Activated CD4-positive, alpha-beta memory T cell treated with anti-CD3 and anti-CD28 coated beads, Interleukin-2, amount 10 ng/mL, durations not matched to agents 7 days and 5 days (primary cell): ENCODE measurements at regions of chr3 and their contacts with region 1.

Region 1: GRCh38 chr3:4978204-4978965 is 852 bp upstream of the BHLHE40 start:
- DNase-seq: peak; percentile 92
- H3K4me3 Mint-ChIP-seq: peak overlapping the region; percentile 94
- H3K27ac Mint-ChIP-seq: peak overlapping the region; percentile 99
- H3K4me1 Mint-ChIP-seq: peaks cover 42% of the 10 kb centered on the region
- H3K27me3 Mint-ChIP-seq: no peaks in the 10 kb centered on the region

Region 2: GRCh38 chr3:4736284-4736861 is 242.0 kb before region 1 on chr3:
- CTCF ChIA-PET with region 1: interaction called, 16 read pairs
- POLR2A ChIA-PET with region 1: interaction called, 107 read pairs
- DNase-seq: no peak
- H3K4me3 Mint-ChIP-seq: peak overlapping the region; percentile 14
- H3K27ac Mint-ChIP-seq: peak overlapping the region; percentile 87
- H3K4me1 Mint-ChIP-seq: peaks cover 82% of the 10 kb centered on the region
- H3K27me3 Mint-ChIP-seq: no peaks in the 10 kb centered on the region

Region 3: DNA sequence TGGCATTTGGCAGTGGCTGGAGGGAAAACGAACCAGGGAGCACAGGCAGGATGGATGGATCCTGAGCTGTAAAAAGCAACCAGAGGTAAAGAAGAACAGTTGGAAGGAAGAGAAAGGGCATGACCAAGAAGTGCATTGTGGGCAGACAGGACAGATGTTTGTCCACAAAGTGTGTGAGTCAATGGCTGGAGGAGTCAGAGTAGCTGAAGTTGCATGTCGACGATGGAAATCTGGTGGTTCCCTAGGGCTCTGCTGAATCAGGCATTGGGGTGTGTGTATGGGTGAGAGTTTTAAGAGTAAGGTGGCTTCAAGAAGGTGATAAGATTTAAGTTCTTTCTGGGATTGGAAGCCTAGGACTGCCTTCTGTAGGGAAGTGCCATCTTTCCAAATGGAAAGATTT is 213.2 kb before region 1 on chr3:
- CTCF ChIA-PET with region 1: no interaction called
- POLR2A ChIA-PET with region 1: no interaction called
- DNase-seq: no peak
- H3K4me3 Mint-ChIP-seq: no peak overlapping the region
- H3K27ac Mint-ChIP-seq: no peak overlapping the region
- H3K4me1 Mint-ChIP-seq: peaks cover 5% of the 10 kb centered on the region
- H3K27me3 Mint-ChIP-seq: no peaks in the 10 kb centered on the region

Region 4: DNA sequence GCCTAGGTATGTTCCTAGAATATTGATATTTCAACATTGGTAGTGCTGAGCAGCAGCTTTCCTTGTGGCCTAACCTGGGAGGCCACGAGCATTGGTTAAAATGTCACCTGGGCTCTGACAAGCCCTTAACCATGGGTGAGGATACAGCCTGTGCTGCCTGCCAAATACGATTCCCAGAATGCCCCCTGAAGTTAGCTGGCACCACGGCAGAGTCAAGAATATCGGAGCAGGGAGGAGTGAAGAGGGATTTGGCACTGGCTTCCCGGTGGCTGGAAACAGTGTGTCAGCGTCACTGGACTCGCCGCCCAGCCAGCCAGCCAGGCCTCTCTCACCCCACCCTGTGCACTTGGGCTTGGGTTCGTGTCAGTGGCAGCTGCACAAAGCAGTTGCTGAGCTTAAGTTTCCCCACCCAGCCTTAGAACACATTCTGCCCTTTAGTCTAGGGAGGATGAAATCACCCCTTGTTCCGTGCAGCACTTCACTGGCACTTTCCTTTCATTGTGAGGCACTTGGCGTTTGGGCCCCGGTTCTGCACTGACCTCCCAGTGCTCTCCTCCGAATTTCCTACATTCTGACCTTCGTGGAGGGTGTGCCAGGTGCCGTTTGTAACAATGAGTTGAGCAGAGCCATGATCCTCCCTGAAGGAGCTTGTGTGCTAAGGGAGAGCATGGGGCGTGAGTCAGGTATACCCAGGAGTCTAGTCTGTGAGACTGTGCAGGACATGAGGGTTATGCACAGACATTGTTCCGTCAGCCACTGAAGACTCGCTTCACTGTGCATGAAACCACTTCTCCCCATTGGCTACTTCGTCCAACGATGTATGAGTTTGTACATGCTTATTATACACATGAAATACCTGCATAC is 151.9 kb before region 1 on chr3:
- CTCF ChIA-PET with region 1: interaction called, 106 read pairs
- POLR2A ChIA-PET with region 1: interaction called, 822 read pairs
- DNase-seq: no peak
- H3K4me3 Mint-ChIP-seq: peak overlapping the region; percentile 83
- H3K27ac Mint-ChIP-seq: peak overlapping the region; percentile 93
- H3K4me1 Mint-ChIP-seq: peaks cover 94% of the 10 kb centered on the region
- H3K27me3 Mint-ChIP-seq: no peaks in the 10 kb centered on the region

Region 5: DNA sequence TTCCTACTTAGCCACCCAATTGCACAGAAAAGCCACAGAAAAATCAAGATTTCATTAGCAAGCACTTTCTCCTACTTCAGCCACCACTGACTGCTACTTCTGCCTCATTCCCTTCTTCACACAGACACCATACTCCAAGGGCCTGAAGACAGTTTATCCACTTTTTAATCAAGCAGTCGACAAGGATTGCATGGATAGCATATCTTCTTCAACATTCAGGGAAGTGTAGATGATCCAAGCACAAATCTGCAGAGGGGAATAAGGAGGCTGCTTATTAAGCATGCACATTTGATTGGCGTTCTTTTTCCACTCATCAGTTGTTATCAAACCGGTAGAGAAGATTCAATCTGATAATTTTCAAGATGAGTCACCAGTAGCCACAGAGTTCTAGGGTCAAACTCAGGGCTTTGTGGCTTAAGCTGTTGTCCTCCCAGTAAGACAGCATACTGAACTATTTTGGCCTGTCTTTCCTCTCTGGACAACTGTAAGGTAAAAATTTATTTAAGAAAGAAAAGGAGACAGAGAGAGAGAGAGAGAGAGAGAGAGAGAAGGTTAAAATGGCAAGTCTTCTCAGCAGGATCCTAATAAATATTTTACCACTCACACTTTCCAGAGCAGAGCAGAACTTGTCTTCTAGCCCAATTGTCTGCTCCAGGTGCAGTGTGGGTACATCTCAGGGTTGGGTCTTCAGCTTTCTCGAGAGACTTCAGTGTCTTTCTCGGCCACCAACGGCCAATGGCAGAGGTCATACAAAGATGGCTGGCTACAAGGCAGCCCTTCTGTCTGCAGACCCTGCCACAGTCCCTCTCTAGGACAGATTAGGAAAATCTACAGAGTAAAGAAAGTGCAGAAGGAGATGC is 79.7 kb before region 1 on chr3:
- CTCF ChIA-PET with region 1: interaction called, 9 read pairs
- POLR2A ChIA-PET with region 1: interaction called, 58 read pairs
- DNase-seq: peak; percentile 29
- H3K4me3 Mint-ChIP-seq: peak overlapping the region; percentile 4
- H3K27ac Mint-ChIP-seq: peak overlapping the region; percentile 76
- H3K4me1 Mint-ChIP-seq: peaks cover 67% of the 10 kb centered on the region
- H3K27me3 Mint-ChIP-seq: no peaks in the 10 kb centered on the region

Region 6: GRCh38 chr3:4963669-4964589 is 14.5 kb before region 1 on chr3:
- CTCF ChIA-PET with region 1: interaction called, 15 read pairs
- POLR2A ChIA-PET with region 1: interaction called, 13 read pairs
- DNase-seq: no peak
- H3K4me3 Mint-ChIP-seq: no peak overlapping the region
- H3K27ac Mint-ChIP-seq: no peak overlapping the region
- H3K4me1 Mint-ChIP-seq: peaks cover 28% of the 10 kb centered on the region
- H3K27me3 Mint-ChIP-seq: no peaks in the 10 kb centered on the region

Region 7: GRCh38 chr3:5057857-5058324 is 79.5 kb after region 1 on chr3:
- CTCF ChIA-PET with region 1: interaction called, 69 read pairs
- POLR2A ChIA-PET with region 1: interaction called, 19 read pairs
- DNase-seq: peak; percentile 86
- H3K4me3 Mint-ChIP-seq: no peak overlapping the region
- H3K27ac Mint-ChIP-seq: no peak overlapping the region
- H3K4me1 Mint-ChIP-seq: peaks cover 50% of the 10 kb centered on the region
- H3K27me3 Mint-ChIP-seq: peaks cover 10% of the 10 kb centered on the region